Panc1 (cell line): ENCODE measurements at regions of chr19 and their contacts with region 1.

Region 1: GRCh38 chr19:45478454-45479238 is 10.8 kb downstream of the FOSB start:
- DNase-seq: peak; percentile 83
- ATAC-seq: peak; percentile 98
- H3K4me3 ChIP-seq: peak overlapping the region; percentile 58 to 80
- H3K27ac ChIP-seq: peak overlapping the region; percentile 99
- H3K4me1 ChIP-seq: peaks cover 9% of the 10 kb centered on the region
- H3K27me3 ChIP-seq: no peaks in the 10 kb centered on the region
- CTCF ChIP-seq: peak; percentile 85

Region 2: GRCh38 chr19:45349430-45349941 is 129.2 kb before region 1 on chr19:
- CTCF ChIA-PET with region 1: interaction called, 10 read pairs
- POLR2A ChIA-PET with region 1: no interaction called
- in situ Hi-C with region 1: no loop called
- intact Hi-C with region 1: no loop called
- DNase-seq: no peak
- ATAC-seq: no peak
- H3K4me3 ChIP-seq: no peak overlapping the region
- H3K27ac ChIP-seq: no peak overlapping the region
- H3K4me1 ChIP-seq: no peaks in the 10 kb centered on the region
- H3K27me3 ChIP-seq: no peaks in the 10 kb centered on the region
- CTCF ChIP-seq: no peak

Region 3: GRCh38 chr19:45439569-45440254 is 38.9 kb before region 1 on chr19:
- CTCF ChIA-PET with region 1: interaction called, 31 read pairs
- POLR2A ChIA-PET with region 1: interaction called, 3 read pairs
- in situ Hi-C with region 1: no loop called
- intact Hi-C with region 1: loop called (anchors 2 kb)
- DNase-seq: no peak
- ATAC-seq: peak; percentile 62
- H3K4me3 ChIP-seq: peak overlapping the region; percentile 42 to 59
- H3K27ac ChIP-seq: 0 out of 2 replicates have a peak overlapping the region, but pooled peaks have one; percentile 39
- H3K4me1 ChIP-seq: peaks cover 8% of the 10 kb centered on the region
- H3K27me3 ChIP-seq: no peaks in the 10 kb centered on the region
- CTCF ChIP-seq: peak; percentile 98

Region 4: DNA sequence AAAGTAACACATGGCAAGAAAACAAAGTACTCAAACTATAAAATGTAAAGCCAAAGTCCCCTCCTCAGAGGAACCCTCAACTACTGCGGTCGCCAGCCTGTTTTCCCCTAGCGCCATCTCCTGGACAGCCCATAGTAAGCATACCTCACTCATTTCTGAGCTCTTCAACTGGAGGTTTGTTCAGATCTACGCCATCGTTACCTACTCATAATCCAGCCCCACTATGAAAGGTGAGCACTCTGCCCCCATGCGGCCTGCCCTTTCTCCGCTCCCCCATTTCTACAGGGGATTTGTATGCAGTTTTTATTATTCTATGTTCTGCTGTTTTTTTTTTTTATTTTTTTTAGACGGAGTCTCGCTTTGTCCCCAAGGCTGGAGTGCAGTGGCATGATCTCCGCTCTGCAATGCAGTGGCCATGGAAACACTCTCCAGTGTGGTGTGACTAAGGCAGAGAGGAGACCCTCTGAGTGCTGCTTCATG is 79.8 kb after region 1 on chr19:
- CTCF ChIA-PET with region 1: interaction called, 11 read pairs
- POLR2A ChIA-PET with region 1: no interaction called
- in situ Hi-C with region 1: no loop called
- intact Hi-C with region 1: no loop called
- DNase-seq: no peak
- ATAC-seq: peak; percentile 74
- H3K4me3 ChIP-seq: no peak overlapping the region
- H3K27ac ChIP-seq: no peak overlapping the region
- H3K4me1 ChIP-seq: no peaks in the 10 kb centered on the region
- H3K27me3 ChIP-seq: no peaks in the 10 kb centered on the region
- CTCF ChIP-seq: peak; percentile 82

Region 5: GRCh38 chr19:45615795-45616708 is 137.4 kb after region 1 on chr19:
- CTCF ChIA-PET with region 1: no interaction called
- POLR2A ChIA-PET with region 1: no interaction called
- in situ Hi-C with region 1: no loop called
- intact Hi-C with region 1: no loop called
- DNase-seq: no peak
- ATAC-seq: peak; percentile 82
- H3K4me3 ChIP-seq: no peak overlapping the region
- H3K27ac ChIP-seq: no peak overlapping the region
- H3K4me1 ChIP-seq: peaks cover 5% of the 10 kb centered on the region; the same call in 1 of the 2 replicates
- H3K27me3 ChIP-seq: no peaks in the 10 kb centered on the region
- CTCF ChIP-seq: no peak